SK-N-SH (cell line): ENCODE measurements at regions of chr3 and their contacts with region 1.

Region 1: GRCh38 chr3:141460097-141460704 is 26.6 kb upstream of the RASA2 start:
- DNase-seq: peak; percentile 84
- H3K4me3 ChIP-seq: peak overlapping the region in 1 of 2 experiments; percentile 2; a peak in 1 of 4 replicates
- H3K27ac ChIP-seq: no peak overlapping the region
- H3K4me1 ChIP-seq: no peaks in the 10 kb centered on the region; a peak in 2 of 4 replicates
- H3K27me3 ChIP-seq: no peaks in the 10 kb centered on the region
- CTCF ChIP-seq: peak; percentile 89
- EP300 ChIP-seq: no peak
- RAD21 ChIP-seq: peak; percentile 91

Region 2: GRCh38 chr3:141114816-141115460 is 345.3 kb before region 1 on chr3:
- CTCF ChIA-PET with region 1: no interaction called
- POLR2A ChIA-PET with region 1: no interaction called
- DNase-seq: peak; percentile 50
- H3K4me3 ChIP-seq: no peak overlapping the region
- H3K27ac ChIP-seq: no peak overlapping the region
- H3K4me1 ChIP-seq: no peaks in the 10 kb centered on the region
- H3K27me3 ChIP-seq: no peaks in the 10 kb centered on the region
- CTCF ChIP-seq: peak; percentile 28; the same call in 1 of the 2 replicates
- EP300 ChIP-seq: no peak
- RAD21 ChIP-seq: peak; percentile 13; the same call in 1 of the 2 replicates

Region 3: DNA sequence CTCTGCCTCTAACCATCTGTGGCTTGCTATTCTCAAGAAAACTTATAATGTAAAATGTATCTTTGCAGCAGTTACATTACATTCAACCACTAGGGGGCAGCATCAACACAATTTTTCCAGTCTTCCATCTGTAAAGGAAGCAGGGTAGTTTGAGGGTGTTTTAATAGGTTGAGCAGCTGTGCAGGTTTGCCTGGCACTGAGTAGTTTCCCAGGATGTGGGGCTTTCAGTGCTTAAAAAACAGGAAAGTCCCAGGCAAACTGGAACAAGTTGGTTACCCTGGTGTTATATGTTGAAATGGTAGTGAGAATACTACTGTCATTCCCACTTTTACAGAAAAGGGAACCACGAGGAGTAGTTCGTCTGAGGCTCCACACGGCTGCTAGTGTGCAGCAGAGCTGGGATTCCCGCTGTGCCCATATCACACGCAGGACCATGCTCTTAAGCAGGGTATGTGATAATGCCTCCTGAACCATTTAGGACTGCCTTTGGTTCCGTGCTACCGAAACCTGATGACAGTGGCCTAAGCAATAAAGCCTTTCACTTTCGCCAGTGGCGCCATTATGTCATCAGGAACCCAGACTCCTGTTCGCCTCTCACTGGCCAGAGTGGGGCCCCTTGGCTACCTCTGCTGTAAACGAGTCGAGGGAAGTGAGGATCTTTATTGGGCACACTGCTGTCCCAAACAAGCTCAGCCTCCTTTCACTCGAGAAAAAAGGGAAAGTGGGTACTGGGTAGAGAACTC is 156.5 kb before region 1 on chr3:
- CTCF ChIA-PET with region 1: interaction called, 29 read pairs
- POLR2A ChIA-PET with region 1: no interaction called
- DNase-seq: peak; percentile 66
- H3K4me3 ChIP-seq: no peak overlapping the region; a peak in 1 of 4 replicates
- H3K27ac ChIP-seq: no peak overlapping the region
- H3K4me1 ChIP-seq: no peaks in the 10 kb centered on the region; a peak in 1 of 4 replicates
- H3K27me3 ChIP-seq: no peaks in the 10 kb centered on the region
- CTCF ChIP-seq: peak; percentile 89
- EP300 ChIP-seq: no peak
- RAD21 ChIP-seq: peak; percentile 75

Region 4: GRCh38 chr3:141487521-141488252 is 27.5 kb after region 1 on chr3:
- CTCF ChIA-PET with region 1: interaction called, 13 read pairs
- POLR2A ChIA-PET with region 1: no interaction called
- DNase-seq: peak; percentile 84
- H3K4me3 ChIP-seq: peak overlapping the region; percentile 68 to 80
- H3K27ac ChIP-seq: peak overlapping the region; percentile 83 to 87
- H3K4me1 ChIP-seq: peaks cover 7 to 25% of the 10 kb centered on the region in 2 experiments; a peak in 3 of 4 replicates
- H3K27me3 ChIP-seq: no peaks in the 10 kb centered on the region
- CTCF ChIP-seq: no peak
- EP300 ChIP-seq: no peak
- RAD21 ChIP-seq: no peak

Region 5: DNA sequence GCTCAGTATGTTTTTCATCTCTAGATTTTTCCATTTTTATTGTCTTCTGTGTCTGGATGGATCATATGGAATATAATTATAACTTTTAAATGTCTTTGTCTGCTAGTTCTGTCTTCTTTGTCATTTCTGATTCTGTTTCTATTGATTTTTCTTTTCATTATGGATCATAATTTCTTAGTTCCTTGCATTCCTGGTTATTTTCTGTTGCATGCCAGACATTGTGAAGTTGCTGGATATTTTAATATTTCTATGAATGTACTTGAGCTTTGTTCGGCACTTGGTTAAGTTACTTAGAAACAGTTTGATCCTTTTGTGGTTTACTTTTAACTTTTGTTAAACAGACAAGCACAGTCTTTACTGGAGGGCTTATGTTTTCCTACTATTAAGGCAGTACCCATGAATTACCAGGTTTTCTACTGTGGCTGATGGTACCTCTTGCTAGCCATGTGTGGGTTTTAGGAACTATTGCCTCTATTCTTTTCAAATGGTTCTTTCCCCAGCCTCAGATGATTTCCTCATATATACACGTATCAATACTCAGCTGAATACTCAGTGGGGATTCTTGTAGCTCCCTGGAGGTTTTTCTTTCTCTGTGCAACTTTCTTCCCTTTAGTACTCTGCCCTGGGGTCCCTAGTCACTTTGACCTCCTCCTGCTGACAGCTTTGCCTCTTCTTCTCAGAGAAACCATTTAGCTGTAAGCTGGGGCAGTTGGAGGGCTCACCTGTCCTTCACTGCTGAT is 90.9 kb after region 1 on chr3:
- CTCF ChIA-PET with region 1: interaction called, 12 read pairs
- POLR2A ChIA-PET with region 1: no interaction called
- DNase-seq: no peak
- H3K4me3 ChIP-seq: no peak overlapping the region
- H3K27ac ChIP-seq: no peak overlapping the region
- H3K4me1 ChIP-seq: peaks cover 0 to 13% of the 10 kb centered on the region in 2 experiments; a peak in 1 of 4 replicates
- H3K27me3 ChIP-seq: no peaks in the 10 kb centered on the region
- CTCF ChIP-seq: no peak
- EP300 ChIP-seq: no peak
- RAD21 ChIP-seq: no peak

Region 6: DNA sequence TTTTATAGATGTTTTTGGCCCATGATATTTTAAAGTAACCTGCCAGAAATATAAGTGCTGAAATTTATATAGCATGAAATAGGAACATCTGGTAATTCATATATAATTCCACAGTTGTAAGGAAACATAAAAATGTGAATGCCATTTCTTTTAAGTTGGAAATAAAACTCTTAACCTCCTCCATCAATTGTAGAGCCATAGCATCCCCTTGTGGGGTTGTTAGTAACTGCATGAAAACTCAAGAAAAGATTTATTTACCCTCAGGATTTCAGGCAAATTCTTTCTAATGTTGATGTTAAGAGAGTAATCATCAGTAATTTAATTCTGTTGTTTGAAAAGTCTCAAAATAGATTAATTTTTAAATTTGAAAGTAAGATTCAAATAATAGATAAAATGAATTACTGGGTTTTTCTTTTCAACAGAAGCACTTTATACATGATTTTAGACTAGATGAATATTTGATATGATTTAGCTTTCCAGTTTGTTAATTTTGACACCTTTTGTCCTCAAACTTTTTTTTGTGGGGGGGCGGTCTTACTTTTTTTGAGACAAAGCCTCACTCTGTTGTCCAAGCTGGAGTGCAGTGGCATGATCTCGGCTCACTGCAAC is 101.3 kb after region 1 on chr3:
- CTCF ChIA-PET with region 1: interaction called, 102 read pairs
- POLR2A ChIA-PET with region 1: no interaction called
- DNase-seq: peak; percentile 47
- H3K4me3 ChIP-seq: no peak overlapping the region; a peak in 1 of 4 replicates
- H3K27ac ChIP-seq: no peak overlapping the region
- H3K4me1 ChIP-seq: peaks cover 0 to 18% of the 10 kb centered on the region in 2 experiments; a peak in 1 of 4 replicates
- H3K27me3 ChIP-seq: no peaks in the 10 kb centered on the region
- CTCF ChIP-seq: peak; percentile 99
- EP300 ChIP-seq: no peak
- RAD21 ChIP-seq: peak; percentile 98

Region 7: GRCh38 chr3:141570068-141570467 is 109.9 kb after region 1 on chr3:
- CTCF ChIA-PET with region 1: interaction called, 19 read pairs
- POLR2A ChIA-PET with region 1: no interaction called
- DNase-seq: no peak
- H3K4me3 ChIP-seq: no peak overlapping the region
- H3K27ac ChIP-seq: no peak overlapping the region
- H3K4me1 ChIP-seq: no peaks in the 10 kb centered on the region
- H3K27me3 ChIP-seq: no peaks in the 10 kb centered on the region
- CTCF ChIP-seq: no peak
- EP300 ChIP-seq: no peak
- RAD21 ChIP-seq: no peak

Region 8: GRCh38 chr3:141729240-141729639 is 269.0 kb after region 1 on chr3:
- CTCF ChIA-PET with region 1: no interaction called
- POLR2A ChIA-PET with region 1: no interaction called
- DNase-seq: no peak
- H3K4me3 ChIP-seq: no peak overlapping the region
- H3K27ac ChIP-seq: no peak overlapping the region
- H3K4me1 ChIP-seq: no peaks in the 10 kb centered on the region
- H3K27me3 ChIP-seq: no peaks in the 10 kb centered on the region
- CTCF ChIP-seq: no peak
- EP300 ChIP-seq: no peak
- RAD21 ChIP-seq: no peak